CD4-positive, alpha-beta T cell (primary cell): ENCODE measurements at regions of chr3 and their contacts with region 1.

Region 1: DNA sequence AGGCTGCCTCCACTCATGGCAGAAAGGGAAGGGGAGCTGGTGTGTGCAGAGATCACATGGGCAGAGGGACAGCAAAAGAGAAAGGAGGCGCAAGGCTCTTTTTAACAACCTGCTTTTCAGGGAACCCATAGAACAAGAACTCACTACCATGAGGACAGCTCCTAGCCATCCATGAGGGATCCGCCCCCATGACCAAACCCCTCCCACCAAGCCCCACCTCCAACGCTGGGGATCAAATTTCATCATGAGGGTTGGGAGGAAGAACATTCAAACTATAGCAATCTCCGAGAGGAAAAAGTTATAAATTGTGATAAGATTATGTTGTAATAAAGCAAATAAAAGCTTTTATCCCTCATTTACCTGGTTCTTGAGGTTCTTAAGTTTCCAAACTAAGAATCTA is 84.7 kb upstream of the LMCD1 start:
- DNase-seq: peak in 2 of 14 experiments; percentile 5 to 23
- ATAC-seq: no peak
- H3K4me3 ChIP-seq: no peak overlapping the region
- H3K4me3 Mint-ChIP-seq: no peak overlapping the region
- H3K27ac ChIP-seq: no peak overlapping the region
- H3K27ac Mint-ChIP-seq: no peak overlapping the region
- H3K4me1 ChIP-seq: peaks cover 2% of the 10 kb centered on the region
- H3K4me1 Mint-ChIP-seq: peaks cover 11% of the 10 kb centered on the region
- H3K27me3 ChIP-seq: no peaks in the 10 kb centered on the region
- H3K27me3 Mint-ChIP-seq: no peaks in the 10 kb centered on the region
- CTCF ChIP-seq: no peak

Region 2: DNA sequence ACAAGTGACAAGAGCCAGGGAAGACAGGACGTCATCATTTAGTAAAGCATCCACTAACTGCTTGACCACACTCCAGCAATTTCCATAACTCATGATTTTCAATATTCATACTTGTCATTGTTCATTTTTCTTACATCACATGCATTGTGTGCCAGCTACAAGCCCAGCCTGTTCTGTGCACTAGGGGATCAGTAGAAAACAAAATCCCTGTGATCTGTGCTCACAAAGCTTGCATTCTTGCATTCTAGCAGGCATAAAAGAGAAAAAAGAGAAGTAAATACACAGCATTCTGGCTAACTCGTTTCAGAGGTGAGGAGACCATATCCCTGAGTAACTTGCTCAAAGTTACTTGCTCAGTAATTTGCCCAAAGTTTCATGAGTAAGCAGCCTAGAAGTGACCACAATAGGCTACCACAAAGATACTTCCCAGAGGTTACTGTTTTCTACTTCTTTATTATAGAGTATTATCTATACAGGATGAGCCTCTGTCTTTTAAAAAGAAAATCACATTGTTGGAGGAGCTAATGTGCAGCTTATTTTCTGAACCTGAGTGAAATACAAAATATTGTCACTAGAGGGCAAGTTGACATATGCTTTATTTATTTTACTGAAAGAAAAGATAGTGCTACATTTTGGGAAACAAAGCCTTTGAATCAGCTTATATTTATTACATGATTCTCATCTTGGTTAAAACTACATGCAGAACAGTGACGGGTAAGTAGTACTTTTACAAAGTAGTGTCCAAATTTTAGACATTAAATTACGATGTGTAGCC is 616.8 kb before region 1 on chr3:
- CTCF ChIA-PET with region 1: no interaction called
- POLR2A ChIA-PET with region 1: no interaction called
- intact Hi-C with region 1: loop called (anchors 1 to 5 kb)
- DNase-seq: peak in 3 of 14 experiments; percentile 23 to 33 (median 26)
- ATAC-seq: no peak
- H3K4me3 ChIP-seq: no peak overlapping the region
- H3K4me3 Mint-ChIP-seq: no peak overlapping the region
- H3K27ac ChIP-seq: no peak overlapping the region
- H3K27ac Mint-ChIP-seq: no peak overlapping the region
- H3K4me1 ChIP-seq: no peaks in the 10 kb centered on the region
- H3K4me1 Mint-ChIP-seq: no peaks in the 10 kb centered on the region
- H3K27me3 ChIP-seq: no peaks in the 10 kb centered on the region
- H3K27me3 Mint-ChIP-seq: no peaks in the 10 kb centered on the region
- CTCF ChIP-seq: peak; percentile 45

Region 3: DNA sequence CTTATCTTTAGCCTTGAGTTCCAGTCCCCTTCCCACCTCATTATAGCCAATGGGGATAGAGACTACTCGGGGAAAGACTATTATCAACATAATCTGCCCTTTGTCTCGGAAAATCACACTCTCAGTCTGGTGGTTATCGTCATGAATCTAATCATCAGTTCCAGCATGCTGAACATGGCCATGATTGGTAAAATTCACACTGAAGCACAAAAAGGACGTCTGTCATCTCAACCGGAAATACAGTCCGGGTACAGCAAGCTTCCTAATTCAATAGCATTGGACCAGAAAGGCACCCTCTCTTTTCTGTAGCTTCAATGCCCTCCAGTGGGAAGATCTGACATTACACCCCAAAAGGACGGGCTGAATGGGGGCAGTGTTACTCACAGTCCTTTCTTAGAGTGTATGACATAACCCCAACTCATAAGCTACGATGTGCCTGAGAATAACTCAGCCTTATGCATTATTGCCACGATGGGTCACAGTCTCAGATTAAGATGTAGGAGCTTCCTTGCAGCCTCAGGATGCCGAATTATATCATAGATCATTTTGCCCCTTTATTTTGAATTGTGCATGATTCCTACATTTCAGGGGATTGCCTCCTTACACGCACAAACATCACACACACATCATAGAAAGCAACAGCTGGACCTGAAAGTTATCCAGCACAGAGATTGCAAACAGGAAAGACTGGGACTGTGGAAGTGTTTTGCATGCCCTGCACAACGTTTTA is 305.7 kb before region 1 on chr3:
- CTCF ChIA-PET with region 1: no interaction called
- POLR2A ChIA-PET with region 1: no interaction called
- intact Hi-C with region 1: loop called in 1 of 2 experiments (anchors 5 kb)
- DNase-seq: peak; percentile 19 to 72 (median 38)
- ATAC-seq: peak; percentile 82
- H3K4me3 ChIP-seq: no peak overlapping the region
- H3K4me3 Mint-ChIP-seq: peak overlapping the region; percentile 13
- H3K27ac ChIP-seq: no peak overlapping the region
- H3K27ac Mint-ChIP-seq: no peak overlapping the region
- H3K4me1 ChIP-seq: peaks cover 5% of the 10 kb centered on the region
- H3K4me1 Mint-ChIP-seq: peaks cover 7% of the 10 kb centered on the region
- H3K27me3 ChIP-seq: no peaks in the 10 kb centered on the region
- H3K27me3 Mint-ChIP-seq: peaks cover 11% of the 10 kb centered on the region
- CTCF ChIP-seq: peak; percentile 73

Region 4: DNA sequence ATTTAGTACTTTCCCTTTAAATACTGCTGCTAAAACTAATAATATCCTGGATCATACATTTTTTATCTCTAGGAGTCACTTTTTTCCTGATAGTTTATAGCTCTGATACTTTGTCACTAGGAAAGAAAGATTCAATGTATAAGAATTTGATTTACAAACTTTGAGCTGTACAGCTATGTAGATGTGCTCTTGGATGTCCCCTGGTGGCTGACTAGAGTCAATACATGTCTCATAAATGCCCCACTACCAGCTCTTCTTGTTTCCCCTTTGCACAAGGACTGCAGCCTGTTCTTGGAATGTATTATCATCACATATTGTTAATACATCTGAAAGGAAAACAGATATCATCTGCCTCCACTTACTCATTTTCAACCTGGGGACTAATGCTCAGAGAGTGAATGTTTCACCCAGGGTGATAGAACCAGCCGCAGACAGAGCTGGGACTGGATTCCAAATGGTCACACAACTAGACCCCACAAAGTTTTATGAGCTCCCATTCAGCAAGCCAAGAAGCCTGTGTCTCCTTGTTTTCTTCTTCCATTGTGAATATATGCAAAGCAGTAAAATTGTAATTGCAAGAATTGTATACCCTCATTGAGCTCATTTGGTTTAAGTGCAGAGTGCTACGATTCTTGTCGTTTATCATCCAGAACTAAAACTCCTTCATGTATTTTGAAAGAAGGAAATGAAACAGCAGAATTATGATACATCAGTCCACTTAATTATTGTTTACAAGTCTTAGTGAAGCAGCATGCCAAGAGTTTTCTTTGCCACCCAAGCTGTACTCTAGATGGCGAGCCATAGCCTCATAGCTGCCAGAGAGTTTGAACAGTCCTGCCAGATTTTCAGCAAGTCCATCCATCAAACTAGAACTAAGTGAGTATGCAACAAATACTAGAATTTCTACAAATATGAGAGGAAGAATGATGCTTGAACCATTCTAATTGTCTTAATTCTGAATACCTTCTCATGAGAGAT is 177.0 kb before region 1 on chr3:
- CTCF ChIA-PET with region 1: interaction called, 3 read pairs
- POLR2A ChIA-PET with region 1: no interaction called
- intact Hi-C with region 1: loop called in 1 of 2 experiments (anchors 5 kb)
- DNase-seq: peak in 7 of 14 experiments; percentile 2 to 56 (median 28)
- ATAC-seq: peak; percentile 49
- H3K4me3 ChIP-seq: no peak overlapping the region
- H3K4me3 Mint-ChIP-seq: no peak overlapping the region
- H3K27ac ChIP-seq: no peak overlapping the region
- H3K27ac Mint-ChIP-seq: no peak overlapping the region
- H3K4me1 ChIP-seq: no peaks in the 10 kb centered on the region
- H3K4me1 Mint-ChIP-seq: no peaks in the 10 kb centered on the region
- H3K27me3 ChIP-seq: no peaks in the 10 kb centered on the region
- H3K27me3 Mint-ChIP-seq: peaks cover 2% of the 10 kb centered on the region
- CTCF ChIP-seq: peak; percentile 73

Region 5: DNA sequence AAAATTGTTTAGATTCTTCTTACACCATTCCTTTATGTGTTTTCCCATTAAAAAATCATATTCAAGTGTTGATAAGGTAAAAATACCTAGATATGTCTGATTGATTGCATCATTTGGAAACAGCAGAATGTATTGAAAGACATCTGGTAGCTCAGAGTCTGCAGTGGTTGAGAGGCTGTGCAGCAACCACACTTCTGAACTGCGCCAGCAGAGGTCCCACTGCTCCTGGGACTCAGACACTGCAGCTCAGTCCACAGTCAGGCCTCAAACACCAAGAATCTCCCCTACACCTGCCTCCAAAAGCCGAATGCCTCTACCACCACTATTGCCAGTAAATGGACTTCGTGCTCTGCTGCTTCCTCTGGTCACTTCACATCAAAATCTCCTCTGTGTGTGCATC is 92.2 kb before region 1 on chr3:
- CTCF ChIA-PET with region 1: interaction called, 71 read pairs
- POLR2A ChIA-PET with region 1: interaction called, 17 read pairs
- intact Hi-C with region 1: loop called (anchors 1 kb)
- DNase-seq: peak; percentile 22 to 80 (median 49)
- ATAC-seq: peak; percentile 81
- H3K4me3 ChIP-seq: no peak overlapping the region
- H3K4me3 Mint-ChIP-seq: no peak overlapping the region
- H3K27ac ChIP-seq: no peak overlapping the region
- H3K27ac Mint-ChIP-seq: no peak overlapping the region
- H3K4me1 ChIP-seq: peaks cover 17% of the 10 kb centered on the region
- H3K4me1 Mint-ChIP-seq: peaks cover 30% of the 10 kb centered on the region
- H3K27me3 ChIP-seq: no peaks in the 10 kb centered on the region
- H3K27me3 Mint-ChIP-seq: no peaks in the 10 kb centered on the region
- CTCF ChIP-seq: peak; percentile 43